Left colon (tissue), 2 donors: ENCODE measurements at regions of chr13 and their contacts with region 1.

Region 1: GRCh38 chr13:95181586-95181985 is 119.7 kb downstream of the ABCC4 start:
- DNase-seq: no peak
- ATAC-seq: no peak

Region 2: GRCh38 chr13:94753327-94753726 is 428.3 kb before region 1 on chr13:
- intact Hi-C with region 1: no loop called
- DNase-seq: no peak
- ATAC-seq: no peak

Region 3: GRCh38 chr13:95378603-95379002 is 197.0 kb after region 1 on chr13:
- intact Hi-C with region 1: loop called in 1 of 2 experiments (anchors 10 kb)
- DNase-seq: no peak
- ATAC-seq: no peak